ENCODE measurements at regions of chr10 and their contacts with region 1.

Region 1: GRCh38 chr10:21495752-21496342 is 29.6 kb downstream of the SKIDA1 start:
- DNase-seq: peak; percentile 92
- H3K4me3 Mint-ChIP-seq: peak overlapping the region; percentile 82
- H3K27ac Mint-ChIP-seq: peak overlapping the region; percentile 64
- H3K4me1 Mint-ChIP-seq: no peaks in the 10 kb centered on the region
- H3K27me3 Mint-ChIP-seq: peaks cover 21% of the 10 kb centered on the region
- CTCF ChIP-seq: peak; percentile 96

Region 2: DNA sequence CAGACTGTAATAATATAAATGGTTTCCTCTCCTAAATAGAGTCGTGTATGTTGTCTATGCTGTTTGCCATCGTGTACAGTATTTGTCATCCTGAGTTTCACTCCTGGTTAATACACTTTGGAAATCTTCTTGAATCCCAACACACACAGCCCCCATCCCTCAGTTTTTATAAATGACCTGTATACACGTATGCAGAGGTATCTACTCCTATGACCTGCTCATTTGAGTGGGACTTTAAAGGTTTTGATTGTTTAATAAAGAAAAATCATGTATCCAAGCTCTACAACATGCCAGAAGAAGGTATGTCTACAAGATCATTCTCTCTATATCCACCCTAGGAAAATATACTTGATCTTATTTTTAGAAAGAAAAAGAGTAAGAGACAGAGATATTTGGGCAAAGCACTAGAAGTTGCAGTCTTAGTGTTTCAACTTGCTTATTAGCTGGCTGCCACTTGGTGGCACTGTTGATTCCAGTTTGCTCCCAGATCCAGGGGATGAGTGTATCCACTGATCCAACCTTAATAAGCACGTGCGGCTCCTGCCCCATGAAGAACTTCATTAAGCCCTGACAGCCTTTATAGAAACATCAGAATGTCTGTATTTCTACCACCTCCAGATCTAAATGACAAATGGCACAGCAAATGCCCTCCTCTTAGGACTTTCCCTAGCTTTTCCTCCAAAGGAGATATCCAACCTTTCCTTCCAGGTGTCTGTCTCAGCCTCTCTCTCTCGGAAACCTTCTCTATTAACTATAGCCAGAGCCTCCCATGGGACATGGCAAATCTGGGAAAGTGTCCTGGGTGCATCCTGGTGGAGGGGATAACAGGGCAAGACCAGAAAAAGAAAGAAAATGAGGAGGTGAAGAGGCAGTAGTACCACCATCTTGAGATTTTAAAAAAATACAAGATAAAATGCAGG is 417.2 kb before region 1 on chr10:
- CTCF ChIA-PET with region 1: interaction called, 4 read pairs
- POLR2A ChIA-PET with region 1: no interaction called
- intact Hi-C with region 1: loop called (anchors 10 kb)
- DNase-seq: peak; percentile 88
- H3K4me3 Mint-ChIP-seq: no peak overlapping the region
- H3K27ac Mint-ChIP-seq: no peak overlapping the region
- H3K4me1 Mint-ChIP-seq: peaks cover 31% of the 10 kb centered on the region
- H3K27me3 Mint-ChIP-seq: no peaks in the 10 kb centered on the region
- CTCF ChIP-seq: peak; percentile 74

Region 3: GRCh38 chr10:21238717-21239116 is 257.1 kb before region 1 on chr10:
- CTCF ChIA-PET with region 1: no interaction called
- POLR2A ChIA-PET with region 1: no interaction called
- intact Hi-C with region 1: no loop called
- DNase-seq: no peak
- H3K4me3 Mint-ChIP-seq: no peak overlapping the region
- H3K27ac Mint-ChIP-seq: no peak overlapping the region
- H3K4me1 Mint-ChIP-seq: no peaks in the 10 kb centered on the region
- H3K27me3 Mint-ChIP-seq: no peaks in the 10 kb centered on the region
- CTCF ChIP-seq: no peak

Region 4: GRCh38 chr10:21292763-21293517 is 202.9 kb before region 1 on chr10:
- CTCF ChIA-PET with region 1: interaction called, 8 read pairs
- POLR2A ChIA-PET with region 1: interaction called, 13 read pairs
- intact Hi-C with region 1: no loop called
- DNase-seq: peak; percentile 96
- H3K4me3 Mint-ChIP-seq: peak overlapping the region; percentile 63
- H3K27ac Mint-ChIP-seq: peak overlapping the region; percentile 66
- H3K4me1 Mint-ChIP-seq: peaks cover 23% of the 10 kb centered on the region
- H3K27me3 Mint-ChIP-seq: no peaks in the 10 kb centered on the region
- CTCF ChIP-seq: no peak

Region 5: GRCh38 chr10:21364196-21365114 is 131.4 kb before region 1 on chr10:
- CTCF ChIA-PET with region 1: interaction called, 3 read pairs
- POLR2A ChIA-PET with region 1: interaction called, 12 read pairs
- intact Hi-C with region 1: no loop called
- DNase-seq: peak; percentile 94
- H3K4me3 Mint-ChIP-seq: peak overlapping the region; percentile 60
- H3K27ac Mint-ChIP-seq: peak overlapping the region; percentile 92
- H3K4me1 Mint-ChIP-seq: peaks cover 50% of the 10 kb centered on the region
- H3K27me3 Mint-ChIP-seq: no peaks in the 10 kb centered on the region
- CTCF ChIP-seq: no peak

Region 6: GRCh38 chr10:21525367-21526183 is 29.7 kb after region 1 on chr10 and contains the start of gene SKIDA1:
- CTCF ChIA-PET with region 1: interaction called, 5 read pairs
- POLR2A ChIA-PET with region 1: interaction called, 141 read pairs
- intact Hi-C with region 1: loop called (anchors 2 kb)
- DNase-seq: peak; percentile 84
- H3K4me3 Mint-ChIP-seq: peak within 1 kb of the TSS; percentile 97
- H3K27ac Mint-ChIP-seq: peak within 1 kb of the TSS; percentile 100
- H3K4me1 Mint-ChIP-seq: peaks cover 10% of the 10 kb centered on the region
- H3K27me3 Mint-ChIP-seq: no peaks in the 10 kb centered on the region
- CTCF ChIP-seq: no peak
- total RNA-seq, gene SKIDA1: 0.56 and 1.2 TPM in 2 replicates

Region 7: DNA sequence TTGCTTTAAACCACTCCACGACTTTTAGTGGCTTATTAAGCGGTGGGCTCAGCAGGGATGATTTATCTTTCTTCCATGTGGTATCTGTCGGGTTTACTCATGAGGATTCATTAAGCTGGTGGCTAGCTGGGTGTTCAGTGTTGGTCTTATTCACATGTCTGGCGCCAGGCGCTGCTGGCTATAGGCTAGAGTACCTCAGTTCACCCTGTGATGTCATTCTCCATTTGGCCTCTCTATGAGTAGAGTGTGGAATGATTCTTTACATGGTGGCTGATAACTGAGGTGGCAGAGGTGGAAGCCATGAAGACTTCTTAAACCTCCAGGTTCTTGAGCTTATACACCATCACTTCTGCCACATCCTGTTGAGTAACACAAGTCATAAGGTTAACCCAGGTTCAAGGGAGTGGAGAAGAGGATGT is 153.6 kb after region 1 on chr10:
- CTCF ChIA-PET with region 1: no interaction called
- POLR2A ChIA-PET with region 1: no interaction called
- intact Hi-C with region 1: no loop called
- DNase-seq: no peak
- H3K4me3 Mint-ChIP-seq: no peak overlapping the region
- H3K27ac Mint-ChIP-seq: no peak overlapping the region
- H3K4me1 Mint-ChIP-seq: peaks cover 17% of the 10 kb centered on the region
- H3K27me3 Mint-ChIP-seq: no peaks in the 10 kb centered on the region
- CTCF ChIP-seq: no peak

Region 8: GRCh38 chr10:21668831-21669230 is 173.0 kb after region 1 on chr10:
- CTCF ChIA-PET with region 1: no interaction called
- POLR2A ChIA-PET with region 1: no interaction called
- intact Hi-C with region 1: loop called (anchors 5 kb)
- DNase-seq: no peak
- H3K4me3 Mint-ChIP-seq: no peak overlapping the region
- H3K27ac Mint-ChIP-seq: no peak overlapping the region
- H3K4me1 Mint-ChIP-seq: peaks cover 5% of the 10 kb centered on the region
- H3K27me3 Mint-ChIP-seq: no peaks in the 10 kb centered on the region
- CTCF ChIP-seq: no peak

Region 9: GRCh38 chr10:21953585-21954057 is 457.8 kb after region 1 on chr10:
- CTCF ChIA-PET with region 1: interaction called, 6 read pairs
- POLR2A ChIA-PET with region 1: interaction called, 5 read pairs
- intact Hi-C with region 1: loop called (anchors 1 kb)
- DNase-seq: peak; percentile 71
- H3K4me3 Mint-ChIP-seq: no peak overlapping the region
- H3K27ac Mint-ChIP-seq: no peak overlapping the region
- H3K4me1 Mint-ChIP-seq: no peaks in the 10 kb centered on the region
- H3K27me3 Mint-ChIP-seq: no peaks in the 10 kb centered on the region
- CTCF ChIP-seq: peak; percentile 40

Measured in MCF 10A (cell line).